ENCODE measurements at regions of chr17 and their contacts with region 1.

Region 1: GRCh38 chr17:51120739-51121617 is at the start of gene SPAG9:
- DNase-seq: peak; percentile 95 to 96
- ATAC-seq: peak; percentile 69 to 72
- H3K4me3 ChIP-seq: peak within 1 kb of the TSS; percentile 81 to 99 (median 89)
- H3K27ac ChIP-seq: peak within 1 kb of the TSS; percentile 99 to 100 (median 100)
- H3K4me1 ChIP-seq: peaks cover 38% of the 10 kb centered on the region in 2 donors
- H3K27me3 ChIP-seq: no peaks in the 10 kb centered on the region
- CTCF ChIP-seq: no peak
- POLR2A ChIP-seq: peak; percentile 79 to 83
- total RNA-seq, gene SPAG9: 139 to 171 (median 143) TPM

Region 2: GRCh38 chr17:51035431-51035830 is 85.5 kb before region 1 on chr17:
- in situ Hi-C with region 1: no loop called
- intact Hi-C with region 1: no loop called
- DNase-seq: no peak
- ATAC-seq: no peak
- H3K4me3 ChIP-seq: no peak overlapping the region
- H3K27ac ChIP-seq: no peak overlapping the region
- H3K4me1 ChIP-seq: peaks cover 0 to 6% of the 10 kb centered on the region in 2 donors
- H3K27me3 ChIP-seq: no peaks in the 10 kb centered on the region
- CTCF ChIP-seq: no peak
- POLR2A ChIP-seq: no peak

Region 3: GRCh38 chr17:51079049-51079448 is 41.9 kb before region 1 on chr17:
- in situ Hi-C with region 1: no loop called
- intact Hi-C with region 1: loop called (anchors 5 kb)
- DNase-seq: peak in 1 of 2 donors; percentile 67
- ATAC-seq: peak; percentile 82 to 92
- H3K4me3 ChIP-seq: peak overlapping the region in 1 of 4 donors; percentile 22
- H3K27ac ChIP-seq: peak overlapping the region; percentile 64 to 88 (median 81)
- H3K4me1 ChIP-seq: peaks cover 19 to 36% of the 10 kb centered on the region in 2 donors
- H3K27me3 ChIP-seq: no peaks in the 10 kb centered on the region
- CTCF ChIP-seq: no peak
- POLR2A ChIP-seq: no peak

Measured in gastrocnemius medialis (tissue), 4 donors.